Activated T-helper 1 cell treated with anti-CD3 and anti-CD28 coated beads, Interleukin-12 subunit alpha, Interleukin-12 subunit beta, Interleukin-2, Interleukin-4 antibody, amounts not matched to agents 30 ng/mL and 10 ng/mL and 1 ng/mL, durations not matched to agents 14 hours and 24 hours and 36 hours (primary cell): ENCODE measurements at regions of chr11 and their contacts with region 1.

Region 1: DNA sequence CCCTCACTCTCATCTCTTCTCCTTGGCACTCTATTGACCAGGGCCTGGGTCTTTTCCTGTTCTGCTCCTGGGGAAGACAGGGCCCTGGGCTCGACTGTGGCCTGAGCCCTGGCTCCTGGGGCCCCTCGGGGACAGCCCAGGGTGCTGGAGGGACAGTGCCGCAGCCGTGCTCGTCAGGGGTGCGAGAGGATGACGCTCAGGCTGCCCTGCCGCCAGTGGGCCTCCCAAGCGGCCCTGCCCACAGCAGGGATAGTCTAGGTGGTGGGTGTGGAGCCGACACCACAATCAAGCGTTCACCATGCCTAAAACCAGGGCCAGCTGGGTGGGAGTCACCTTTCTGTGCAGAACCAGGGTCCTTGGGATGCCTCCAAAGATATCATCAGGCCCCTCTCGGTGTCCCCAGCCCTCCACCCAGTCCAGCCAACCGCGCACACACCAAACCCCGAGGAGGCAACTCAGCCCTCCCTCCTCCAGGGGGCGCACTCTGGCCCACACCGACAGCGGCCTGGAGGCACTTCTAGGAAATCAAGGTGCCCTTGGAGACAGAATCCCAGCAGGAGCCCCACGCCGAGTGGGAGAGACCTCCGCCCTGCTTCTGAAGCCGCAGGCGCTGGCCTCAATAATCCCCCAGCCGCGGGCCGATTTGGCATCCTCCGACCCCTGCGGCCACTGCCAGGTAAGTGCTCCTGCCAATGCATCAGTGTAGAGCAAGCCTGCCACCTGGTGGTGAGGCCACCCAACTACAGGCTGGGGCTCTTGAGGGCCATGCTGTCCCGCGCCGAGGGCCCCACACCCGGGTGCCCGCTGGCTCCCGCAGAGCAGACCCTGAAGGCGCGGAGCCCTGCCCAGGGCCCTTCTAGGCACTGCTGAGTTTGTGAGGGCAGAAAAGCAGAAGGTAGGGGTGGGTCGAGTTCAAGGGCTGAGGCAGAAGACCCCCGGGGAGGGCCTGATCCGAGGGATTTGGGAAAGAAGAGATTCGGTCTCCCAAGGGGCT is 496.4 kb downstream of the BUD13 start:
- DNase-seq: peak; percentile 60
- H3K4me3 Mint-ChIP-seq: no peak overlapping the region
- H3K27ac Mint-ChIP-seq: no peak overlapping the region
- H3K4me1 Mint-ChIP-seq: no peaks in the 10 kb centered on the region
- H3K27me3 Mint-ChIP-seq: no peaks in the 10 kb centered on the region

Region 2: GRCh38 chr11:114738954-114739353 is 1537.4 kb before region 1 on chr11:
- intact Hi-C with region 1: loop called (anchors 10 kb)
- DNase-seq: no peak
- H3K4me3 Mint-ChIP-seq: no peak overlapping the region
- H3K27ac Mint-ChIP-seq: no peak overlapping the region
- H3K4me1 Mint-ChIP-seq: no peaks in the 10 kb centered on the region
- H3K27me3 Mint-ChIP-seq: no peaks in the 10 kb centered on the region

Region 3: GRCh38 chr11:114774599-114775361 is 1501.6 kb before region 1 on chr11:
- intact Hi-C with region 1: loop called (anchors 2 kb)
- DNase-seq: no peak
- H3K4me3 Mint-ChIP-seq: no peak overlapping the region
- H3K27ac Mint-ChIP-seq: no peak overlapping the region
- H3K4me1 Mint-ChIP-seq: peaks cover 2% of the 10 kb centered on the region
- H3K27me3 Mint-ChIP-seq: no peaks in the 10 kb centered on the region

Region 4: GRCh38 chr11:115324581-115325432 is 951.5 kb before region 1 on chr11:
- intact Hi-C with region 1: loop called (anchors 1 kb)
- DNase-seq: peak; percentile 20
- H3K4me3 Mint-ChIP-seq: no peak overlapping the region
- H3K27ac Mint-ChIP-seq: no peak overlapping the region
- H3K4me1 Mint-ChIP-seq: no peaks in the 10 kb centered on the region
- H3K27me3 Mint-ChIP-seq: peaks cover 4% of the 10 kb centered on the region

Region 5: DNA sequence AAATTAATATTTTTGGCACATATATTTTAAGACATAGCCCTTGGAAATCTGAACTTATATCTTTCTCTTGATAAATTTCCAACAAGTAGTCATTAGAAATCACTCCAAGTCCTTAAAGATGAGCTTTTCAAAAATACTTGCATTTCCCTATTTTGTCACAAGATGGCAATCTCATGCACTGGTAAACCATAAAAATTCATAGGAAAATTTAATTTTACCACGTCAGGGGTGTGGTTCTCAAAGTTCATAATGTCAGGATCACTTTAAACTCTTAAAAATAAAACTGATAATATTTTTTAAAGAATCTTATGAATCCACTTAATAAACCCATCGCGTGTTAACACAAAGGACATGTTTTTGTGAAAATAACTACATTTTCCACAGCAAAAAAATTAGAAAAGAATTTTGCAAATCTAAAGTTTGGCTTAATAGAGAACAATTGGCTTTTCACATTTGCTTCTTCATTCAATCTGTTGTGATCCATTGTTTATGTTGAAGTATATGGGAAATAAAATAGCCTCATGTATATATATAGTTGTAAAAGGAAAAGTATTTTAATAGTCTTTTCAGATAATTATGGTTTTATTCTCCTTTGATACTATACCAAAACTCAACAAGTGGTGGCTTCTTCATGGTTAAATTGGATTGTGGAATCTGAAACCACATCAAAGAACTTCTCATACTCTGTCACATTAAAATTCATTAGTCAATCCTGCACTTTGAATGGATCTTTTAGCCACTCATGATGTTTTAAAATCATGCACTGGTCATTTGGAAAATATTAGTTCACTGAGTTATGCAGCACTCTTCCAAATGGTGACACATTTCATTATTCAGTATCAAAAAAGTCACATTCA is 941.2 kb before region 1 on chr11:
- intact Hi-C with region 1: loop called (anchors 1 kb)
- DNase-seq: no peak
- H3K4me3 Mint-ChIP-seq: no peak overlapping the region
- H3K27ac Mint-ChIP-seq: no peak overlapping the region
- H3K4me1 Mint-ChIP-seq: no peaks in the 10 kb centered on the region
- H3K27me3 Mint-ChIP-seq: no peaks in the 10 kb centered on the region

Region 6: DNA sequence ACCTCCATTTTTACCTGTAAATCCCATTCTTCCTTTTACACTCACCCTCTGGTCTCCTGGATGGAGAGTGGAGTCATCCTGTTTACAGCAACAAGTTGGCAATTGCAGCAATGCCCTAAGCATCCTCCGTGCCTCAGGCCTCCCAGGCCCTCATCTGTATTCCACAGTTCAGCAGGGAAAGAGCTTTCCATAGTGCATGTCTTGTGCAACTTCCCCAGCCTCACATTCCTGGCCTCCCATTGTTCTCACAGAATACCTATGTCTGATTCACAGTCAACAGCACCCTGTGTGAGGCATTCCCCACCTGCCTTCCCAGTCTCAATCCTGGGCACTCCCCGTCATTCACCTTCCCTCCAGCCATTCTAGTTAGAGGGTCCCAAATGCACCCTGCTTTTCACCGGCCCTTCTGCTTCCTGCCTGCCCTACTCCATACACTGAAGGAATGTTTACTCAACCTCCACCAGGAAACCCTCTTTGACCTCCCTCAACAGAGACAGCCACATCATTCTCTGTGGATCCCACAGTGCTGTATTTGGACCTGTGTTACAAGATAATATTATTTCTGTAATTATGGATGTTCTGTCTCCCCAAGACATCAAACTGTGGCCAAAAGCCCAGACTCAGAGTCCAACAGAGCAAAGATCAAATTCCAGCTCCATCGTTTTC is 90.8 kb after region 1 on chr11:
- intact Hi-C with region 1: no loop called
- DNase-seq: no peak
- H3K4me3 Mint-ChIP-seq: no peak overlapping the region
- H3K27ac Mint-ChIP-seq: no peak overlapping the region
- H3K4me1 Mint-ChIP-seq: no peaks in the 10 kb centered on the region
- H3K27me3 Mint-ChIP-seq: peaks cover 2% of the 10 kb centered on the region